ENCODE measurements at regions of chr12 and their contacts with region 1.

Region 1: GRCh38 chr12:5083955-5084849 is 40.5 kb downstream of the KCNA5 start:
- DNase-seq: no peak
- ATAC-seq: no peak
- H3K4me3 Mint-ChIP-seq: no peak overlapping the region
- H3K27ac Mint-ChIP-seq: no peak overlapping the region
- H3K4me1 Mint-ChIP-seq: no peaks in the 10 kb centered on the region
- H3K27me3 Mint-ChIP-seq: peaks cover 3% of the 10 kb centered on the region

Region 2: GRCh38 chr12:5022465-5023061 is 61.6 kb before region 1 on chr12:
- CTCF ChIA-PET with region 1: interaction called, 18 read pairs
- DNase-seq: peak; percentile 51
- ATAC-seq: peak; percentile 60
- H3K4me3 Mint-ChIP-seq: no peak overlapping the region
- H3K27ac Mint-ChIP-seq: no peak overlapping the region
- H3K4me1 Mint-ChIP-seq: no peaks in the 10 kb centered on the region
- H3K27me3 Mint-ChIP-seq: peaks cover 2% of the 10 kb centered on the region